ENCODE measurements at regions of chr10 and their contacts with region 1.

Region 1: DNA sequence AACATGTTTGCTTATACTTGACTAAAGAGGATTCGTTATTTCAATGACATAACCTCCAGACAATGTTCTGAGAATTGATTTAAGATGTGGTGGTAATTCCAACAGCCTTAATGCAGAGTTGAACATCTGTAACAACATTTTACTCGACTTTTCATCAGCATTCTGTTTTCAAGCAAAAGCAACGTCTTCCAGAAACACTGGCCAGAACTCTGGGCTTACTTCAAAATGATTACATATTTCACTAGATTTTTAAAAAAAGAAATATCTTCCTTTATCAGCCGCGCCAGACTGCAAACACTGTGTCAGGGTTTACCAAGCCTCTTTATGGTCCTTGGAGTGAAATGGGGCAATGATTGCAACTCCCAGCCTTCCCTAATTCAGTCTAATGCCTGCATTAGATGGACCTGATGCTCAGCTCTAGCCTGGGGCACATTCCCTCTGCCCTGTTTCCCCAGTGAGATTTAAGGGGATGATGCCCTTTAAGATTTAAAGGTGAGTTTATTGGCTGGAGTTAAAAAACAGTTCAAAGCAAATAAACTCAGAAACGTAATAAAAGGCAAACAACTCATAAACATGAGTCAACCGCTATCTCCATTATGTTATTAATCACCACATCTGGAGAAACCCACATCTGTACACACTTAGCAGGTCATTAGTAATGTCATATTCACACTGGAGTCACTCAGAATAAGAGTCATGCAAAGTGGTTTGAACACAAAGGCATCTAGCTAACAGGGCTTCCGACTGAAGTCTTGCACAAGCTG is 663.9 kb downstream of the KCNMA1 start:
- DNase-seq: no peak
- H3K4me3 ChIP-seq: no peak overlapping the region
- H3K27ac ChIP-seq: peak overlapping the region in 3 of 4 donors; percentile 21 to 74 (median 68)
- H3K4me1 ChIP-seq: peaks cover 0 to 25% (median 8%) of the 10 kb centered on the region in 4 donors
- H3K27me3 ChIP-seq: no peaks in the 10 kb centered on the region
- CTCF ChIP-seq: no peak
- EP300 ChIP-seq: no peak
- POLR2A ChIP-seq: no peak

Region 2: DNA sequence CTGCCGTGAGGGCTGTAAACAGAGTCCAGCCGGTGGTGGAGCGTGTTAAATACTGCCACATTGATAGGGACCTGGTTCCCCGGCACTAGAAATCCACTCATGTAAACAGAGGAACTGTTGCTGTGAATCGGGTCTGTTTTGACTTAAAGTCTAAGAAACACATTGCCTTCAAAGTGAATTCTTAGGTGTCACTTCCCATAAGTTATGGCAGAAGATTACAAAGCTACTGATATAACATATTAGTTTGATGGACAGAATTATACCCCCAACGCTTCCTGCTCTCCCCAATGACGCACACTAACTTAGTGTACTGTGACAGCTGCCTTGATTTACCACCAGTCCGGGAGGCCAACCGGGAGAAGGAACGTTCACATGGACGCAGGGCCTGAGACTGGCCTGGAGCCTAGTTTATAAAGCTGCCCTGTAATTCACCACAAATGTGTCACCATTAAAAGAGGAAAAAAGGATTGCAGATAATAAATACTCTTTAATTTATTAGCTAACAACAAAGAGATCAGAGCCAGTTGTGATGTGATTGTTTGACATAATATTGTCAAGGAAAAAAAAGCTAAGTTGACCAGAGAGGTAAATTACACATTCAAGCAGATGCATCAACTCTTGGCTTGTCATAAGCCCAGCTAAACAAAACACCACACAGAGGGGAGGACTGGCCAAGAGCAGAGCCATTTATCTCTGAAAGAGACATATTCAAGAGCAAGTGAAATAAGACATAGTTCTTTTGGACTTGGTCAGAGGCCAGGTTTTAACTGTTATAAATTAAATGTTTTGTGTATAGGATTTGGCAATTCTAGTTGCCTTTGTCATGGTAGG is 721.6 kb before region 1 on chr10:
- in situ Hi-C with region 1: no loop called
- intact Hi-C with region 1: loop called (anchors 5 kb)
- DNase-seq: peak; percentile 71
- H3K4me3 ChIP-seq: no peak overlapping the region
- H3K27ac ChIP-seq: peak overlapping the region; percentile 52 to 87 (median 65)
- H3K4me1 ChIP-seq: peaks cover 0 to 8% (median 0%) of the 10 kb centered on the region in 4 donors
- H3K27me3 ChIP-seq: no peaks in the 10 kb centered on the region
- CTCF ChIP-seq: no peak
- EP300 ChIP-seq: peak; percentile 91
- POLR2A ChIP-seq: no peak

Region 3: DNA sequence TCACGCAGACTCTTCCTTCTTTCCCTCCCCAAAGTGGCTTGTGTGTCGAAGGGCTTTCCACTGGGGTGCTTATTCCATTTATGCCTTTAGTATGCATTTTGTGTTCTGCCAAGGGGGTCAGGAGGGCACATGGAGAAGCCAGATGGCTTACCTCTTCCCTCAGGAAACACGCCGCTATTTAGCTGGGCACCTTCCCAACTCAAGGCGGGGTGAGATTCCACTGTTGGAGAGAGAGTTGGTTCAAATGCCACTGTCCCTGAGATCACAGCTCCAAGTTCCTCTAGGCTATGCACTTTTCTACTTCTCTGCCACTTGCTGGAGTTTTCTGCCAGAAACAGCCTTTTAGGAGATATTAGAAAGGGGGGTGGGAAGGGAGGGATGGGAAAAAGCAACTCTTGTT is 450.5 kb before region 1 on chr10:
- in situ Hi-C with region 1: no loop called
- intact Hi-C with region 1: loop called (anchors 10 kb)
- DNase-seq: no peak
- H3K4me3 ChIP-seq: no peak overlapping the region
- H3K27ac ChIP-seq: peak overlapping the region; percentile 21 to 82 (median 60)
- H3K4me1 ChIP-seq: peaks cover 0 to 12% (median 0%) of the 10 kb centered on the region in 4 donors
- H3K27me3 ChIP-seq: no peaks in the 10 kb centered on the region
- CTCF ChIP-seq: no peak
- EP300 ChIP-seq: no peak
- POLR2A ChIP-seq: no peak

Region 4: DNA sequence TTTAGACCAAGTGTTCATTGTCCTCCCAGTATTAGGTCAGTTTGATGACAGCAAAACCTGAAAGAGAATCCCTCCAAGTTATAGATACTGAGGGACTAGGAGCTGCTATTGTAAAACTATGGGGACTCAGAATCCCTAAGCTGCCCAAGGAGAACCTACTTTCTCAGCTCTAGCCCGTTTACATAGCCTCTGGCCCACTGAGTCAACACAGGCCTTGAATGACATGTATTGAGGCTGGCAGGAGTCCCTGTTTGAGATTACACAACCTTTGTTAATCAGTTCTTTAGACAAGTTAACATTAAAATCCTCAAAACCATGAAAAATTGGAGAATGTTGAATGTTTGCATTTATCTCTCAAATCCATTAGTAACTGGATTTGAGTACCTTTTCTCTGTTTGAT is 415.1 kb before region 1 on chr10:
- in situ Hi-C with region 1: loop called in 1 of 4 experiments (anchors 25 kb)
- intact Hi-C with region 1: loop called (anchors 10 kb)
- DNase-seq: peak; percentile 32
- H3K4me3 ChIP-seq: no peak overlapping the region
- H3K27ac ChIP-seq: peak overlapping the region; percentile 2 to 76 (median 22)
- H3K4me1 ChIP-seq: peaks cover 0 to 18% (median 5%) of the 10 kb centered on the region in 4 donors
- H3K27me3 ChIP-seq: no peaks in the 10 kb centered on the region
- CTCF ChIP-seq: no peak
- EP300 ChIP-seq: no peak
- POLR2A ChIP-seq: no peak

Region 5: GRCh38 chr10:76649723-76650127 is 324.0 kb before region 1 on chr10:
- in situ Hi-C with region 1: no loop called
- intact Hi-C with region 1: loop called (anchors 10 kb)
- DNase-seq: peak; percentile 51
- H3K4me3 ChIP-seq: no peak overlapping the region
- H3K27ac ChIP-seq: peak overlapping the region; percentile 10 to 61 (median 56)
- H3K4me1 ChIP-seq: peaks cover 5 to 27% (median 9%) of the 10 kb centered on the region in 4 donors
- H3K27me3 ChIP-seq: no peaks in the 10 kb centered on the region
- CTCF ChIP-seq: no peak
- EP300 ChIP-seq: no peak
- POLR2A ChIP-seq: no peak

Region 6: GRCh38 chr10:77391605-77392235 is 418.0 kb after region 1 on chr10:
- in situ Hi-C with region 1: no loop called
- intact Hi-C with region 1: no loop called
- DNase-seq: peak; percentile 83
- H3K4me3 ChIP-seq: no peak overlapping the region
- H3K27ac ChIP-seq: peak overlapping the region; percentile 33 to 82 (median 68)
- H3K4me1 ChIP-seq: peaks cover 5 to 30% (median 24%) of the 10 kb centered on the region in 4 donors
- H3K27me3 ChIP-seq: peaks cover 12% of the 10 kb centered on the region
- CTCF ChIP-seq: peak; percentile 60 to 69 (median 65)
- EP300 ChIP-seq: no peak
- POLR2A ChIP-seq: no peak